ENCODE measurements at regions of chr12 and their contacts with region 1.

Region 1: DNA sequence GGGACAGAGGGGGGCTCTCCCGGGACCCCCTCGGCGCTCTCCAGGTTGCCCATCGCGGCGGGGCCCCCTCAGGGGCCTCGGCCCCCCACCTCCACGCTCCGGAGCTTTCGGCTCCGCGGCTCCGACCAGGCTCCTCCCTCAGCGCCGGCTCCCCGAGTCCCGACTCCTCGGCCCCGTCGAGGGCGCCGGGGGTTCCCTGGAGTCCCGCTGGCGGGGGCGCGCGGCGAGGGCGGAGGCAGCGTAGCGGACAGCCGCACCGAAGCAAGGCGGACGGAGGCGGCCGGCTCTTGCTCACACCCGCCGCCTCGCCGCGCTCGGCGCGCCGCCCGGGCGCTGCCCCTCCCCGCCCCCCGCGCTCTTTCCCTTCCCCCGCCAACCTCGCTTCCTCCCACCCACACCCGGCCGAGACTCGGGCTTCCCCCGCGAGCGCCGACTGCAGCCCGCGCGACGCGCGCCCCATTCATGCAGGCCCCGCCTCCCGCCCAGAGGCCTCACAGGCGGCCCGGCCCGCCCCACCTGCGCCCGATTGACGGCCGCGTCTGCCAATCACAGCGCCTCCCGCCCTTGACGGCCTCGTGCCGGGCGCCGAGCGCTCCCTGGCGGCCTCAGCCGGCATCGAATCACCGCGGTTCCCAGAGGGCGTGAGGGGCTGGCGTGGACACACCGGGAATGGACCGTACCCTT is at the start of gene FMNL3:
- DNase-seq: peak; percentile 97 to 100 (median 99)
- ATAC-seq: peak; percentile 95
- H3K4me3 ChIP-seq: peak within 1 kb of the TSS; percentile 85
- H3K4me3 Mint-ChIP-seq: peak within 1 kb of the TSS; percentile 94
- H3K27ac ChIP-seq: peak within 1 kb of the TSS; percentile 39 to 82
- H3K27ac Mint-ChIP-seq: peak within 1 kb of the TSS; percentile 78
- H3K4me1 ChIP-seq: peaks cover 42% of the 10 kb centered on the region
- H3K4me1 Mint-ChIP-seq: peaks cover 45% of the 10 kb centered on the region
- H3K27me3 ChIP-seq: no peaks in the 10 kb centered on the region
- H3K27me3 Mint-ChIP-seq: peaks cover 4% of the 10 kb centered on the region
- CTCF ChIP-seq: peak; percentile 93
- total RNA-seq, gene FMNL3: 33.3 to 34.8 TPM

Region 2: GRCh38 chr12:49366652-49367380 is 340.5 kb before region 1 on chr12:
- CTCF ChIA-PET with region 1: no interaction called
- POLR2A ChIA-PET with region 1: no interaction called
- intact Hi-C with region 1: loop called in 1 of 2 experiments (anchors 10 kb)
- DNase-seq: peak; percentile 69 to 92 (median 81)
- ATAC-seq: peak; percentile 82
- H3K4me3 ChIP-seq: peak overlapping the region; percentile 88
- H3K4me3 Mint-ChIP-seq: peak overlapping the region; percentile 99
- H3K27ac ChIP-seq: peak overlapping the region; percentile 66 to 70
- H3K27ac Mint-ChIP-seq: peak overlapping the region; percentile 76
- H3K4me1 ChIP-seq: peaks cover 15% of the 10 kb centered on the region
- H3K4me1 Mint-ChIP-seq: peaks cover 30% of the 10 kb centered on the region
- H3K27me3 ChIP-seq: no peaks in the 10 kb centered on the region
- H3K27me3 Mint-ChIP-seq: no peaks in the 10 kb centered on the region
- CTCF ChIP-seq: no peak

Region 3: DNA sequence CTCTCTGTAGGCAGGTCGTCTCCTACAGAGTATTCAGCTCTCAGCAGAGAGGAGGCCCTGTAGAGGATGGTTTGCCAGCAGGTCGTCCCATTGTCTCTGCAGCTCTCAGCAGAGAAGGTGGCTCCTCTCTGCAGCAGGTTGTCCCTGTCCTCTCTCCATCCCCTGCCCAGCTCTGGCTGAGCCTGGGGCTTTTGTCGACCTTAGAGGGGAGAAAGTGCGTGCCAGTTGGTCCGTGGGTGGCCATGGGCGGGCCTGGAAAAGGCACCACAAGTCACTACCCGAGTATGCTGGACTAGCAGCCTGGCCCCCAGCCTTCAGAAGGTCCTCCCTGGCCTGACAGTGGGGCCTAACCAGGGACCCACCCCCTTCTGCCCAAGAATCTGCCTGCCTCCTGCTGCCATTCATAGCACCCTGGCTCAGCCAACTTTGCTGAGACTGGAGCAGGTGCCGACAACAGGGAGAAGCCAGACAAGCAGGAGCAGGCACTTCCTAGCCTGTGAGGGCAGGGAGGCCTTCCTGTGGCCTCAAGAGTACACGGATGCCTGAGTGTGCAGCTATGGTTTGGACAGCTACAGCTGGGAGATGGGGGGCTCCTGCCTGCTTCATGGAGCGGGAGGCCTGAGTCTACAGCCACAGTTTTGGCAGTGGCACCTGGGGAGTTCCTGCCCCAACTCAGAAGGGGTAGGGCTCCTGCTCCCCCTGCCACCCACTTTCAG is 228.2 kb before region 1 on chr12:
- CTCF ChIA-PET with region 1: no interaction called
- POLR2A ChIA-PET with region 1: no interaction called
- intact Hi-C with region 1: no loop called
- DNase-seq: no peak
- ATAC-seq: no peak
- H3K4me3 ChIP-seq: no peak overlapping the region
- H3K4me3 Mint-ChIP-seq: no peak overlapping the region
- H3K27ac ChIP-seq: no peak overlapping the region
- H3K27ac Mint-ChIP-seq: no peak overlapping the region
- H3K4me1 ChIP-seq: peaks cover 2% of the 10 kb centered on the region
- H3K4me1 Mint-ChIP-seq: peaks cover 29% of the 10 kb centered on the region
- H3K27me3 ChIP-seq: no peaks in the 10 kb centered on the region
- H3K27me3 Mint-ChIP-seq: no peaks in the 10 kb centered on the region
- CTCF ChIP-seq: no peak

Region 4: DNA sequence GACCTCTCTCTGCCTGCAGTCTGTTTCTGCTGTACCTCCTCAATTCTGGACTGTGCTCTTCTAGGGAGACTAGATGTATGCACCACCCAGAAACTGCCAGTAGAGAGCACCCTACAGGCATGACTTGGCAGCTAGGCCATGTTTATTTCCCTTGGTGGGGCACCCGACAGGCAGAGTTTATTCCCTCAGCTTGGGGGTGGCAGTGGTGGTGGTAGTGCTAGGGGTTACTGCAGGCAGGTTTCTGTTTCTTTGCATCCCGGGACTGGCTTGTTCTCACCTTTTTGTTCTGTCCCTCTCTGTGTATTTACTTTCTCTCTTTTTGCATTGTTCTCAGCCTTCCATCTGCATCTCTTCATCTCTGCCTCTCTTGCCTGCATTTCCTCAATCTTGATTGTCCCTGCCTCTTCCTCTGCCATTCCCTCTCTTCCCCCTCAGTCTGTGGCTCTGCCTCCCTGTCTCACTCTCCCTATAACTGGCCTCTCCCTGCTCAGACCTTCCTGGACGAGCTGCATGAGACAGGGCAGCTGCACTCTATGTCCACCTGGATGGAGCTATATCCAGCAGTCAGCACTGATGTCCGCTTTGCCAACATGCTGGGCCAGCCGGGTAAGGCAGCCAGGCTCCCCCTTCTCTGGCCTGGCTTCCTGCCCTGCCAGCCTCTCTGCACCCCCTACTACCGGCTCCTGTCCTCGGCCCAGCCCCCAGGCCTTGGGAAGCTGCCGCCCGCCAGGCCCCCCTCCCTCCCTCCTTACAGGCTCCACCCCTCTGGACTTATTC is 70.1 kb before region 1 on chr12:
- CTCF ChIA-PET with region 1: interaction called, 20 read pairs
- POLR2A ChIA-PET with region 1: interaction called, 14 read pairs
- intact Hi-C with region 1: loop called in 1 of 2 experiments (anchors 2 kb)
- DNase-seq: peak; percentile 31 to 79 (median 47)
- ATAC-seq: peak; percentile 99
- H3K4me3 ChIP-seq: no peak overlapping the region
- H3K4me3 Mint-ChIP-seq: no peak overlapping the region
- H3K27ac ChIP-seq: no peak overlapping the region
- H3K27ac Mint-ChIP-seq: peak overlapping the region; percentile 2
- H3K4me1 ChIP-seq: peaks cover 19% of the 10 kb centered on the region
- H3K4me1 Mint-ChIP-seq: peaks cover 25% of the 10 kb centered on the region
- H3K27me3 ChIP-seq: no peaks in the 10 kb centered on the region
- H3K27me3 Mint-ChIP-seq: no peaks in the 10 kb centered on the region
- CTCF ChIP-seq: peak; percentile 54

Region 5: GRCh38 chr12:49662998-49663843 is 44.0 kb before region 1 on chr12:
- CTCF ChIA-PET with region 1: interaction called, 6 read pairs
- POLR2A ChIA-PET with region 1: interaction called, 58 read pairs
- intact Hi-C with region 1: loop called (anchors 1 to 5 kb)
- DNase-seq: peak; percentile 53 to 91 (median 74)
- ATAC-seq: peak; percentile 97
- H3K4me3 ChIP-seq: peak overlapping the region; percentile 10
- H3K4me3 Mint-ChIP-seq: peak overlapping the region; percentile 90
- H3K27ac ChIP-seq: peak overlapping the region; percentile 88 to 97
- H3K27ac Mint-ChIP-seq: peak overlapping the region; percentile 97
- H3K4me1 ChIP-seq: peaks cover 65% of the 10 kb centered on the region
- H3K4me1 Mint-ChIP-seq: peaks cover 83% of the 10 kb centered on the region
- H3K27me3 ChIP-seq: no peaks in the 10 kb centered on the region
- H3K27me3 Mint-ChIP-seq: no peaks in the 10 kb centered on the region
- CTCF ChIP-seq: no peak

Region 6: DNA sequence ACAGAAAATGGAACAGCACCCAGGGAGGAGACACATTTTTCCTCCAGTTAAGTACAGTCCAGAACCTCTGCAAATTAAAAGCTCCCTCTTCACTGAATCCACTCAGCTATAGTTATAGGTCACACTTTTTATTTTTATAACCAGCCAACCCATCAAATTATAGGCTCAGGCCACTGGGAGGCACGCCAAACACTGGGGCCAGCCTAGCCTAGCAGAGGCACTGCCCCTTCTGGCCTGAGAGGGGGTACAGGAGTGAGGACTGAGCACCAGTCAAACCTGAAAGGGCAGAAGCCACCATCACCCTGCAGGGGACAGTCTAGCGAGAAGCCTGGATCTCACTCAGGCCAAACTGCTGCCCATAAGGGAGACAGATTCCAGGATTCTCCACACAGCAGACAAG is 19.3 kb before region 1 on chr12:
- CTCF ChIA-PET with region 1: interaction called, 4 read pairs
- POLR2A ChIA-PET with region 1: interaction called, 19 read pairs
- intact Hi-C with region 1: loop called in 1 of 2 experiments (anchors 2 kb)
- DNase-seq: no peak
- ATAC-seq: no peak
- H3K4me3 ChIP-seq: no peak overlapping the region
- H3K4me3 Mint-ChIP-seq: no peak overlapping the region
- H3K27ac ChIP-seq: no peak overlapping the region
- H3K27ac Mint-ChIP-seq: no peak overlapping the region
- H3K4me1 ChIP-seq: peaks cover 14% of the 10 kb centered on the region
- H3K4me1 Mint-ChIP-seq: peaks cover 71% of the 10 kb centered on the region
- H3K27me3 ChIP-seq: no peaks in the 10 kb centered on the region
- H3K27me3 Mint-ChIP-seq: no peaks in the 10 kb centered on the region
- CTCF ChIP-seq: no peak

Measured in CD4-positive, alpha-beta T cell (primary cell).